Tibial artery (tissue), 4 donors: ENCODE measurements at regions of chr3 and their contacts with region 1.

Region 1: DNA sequence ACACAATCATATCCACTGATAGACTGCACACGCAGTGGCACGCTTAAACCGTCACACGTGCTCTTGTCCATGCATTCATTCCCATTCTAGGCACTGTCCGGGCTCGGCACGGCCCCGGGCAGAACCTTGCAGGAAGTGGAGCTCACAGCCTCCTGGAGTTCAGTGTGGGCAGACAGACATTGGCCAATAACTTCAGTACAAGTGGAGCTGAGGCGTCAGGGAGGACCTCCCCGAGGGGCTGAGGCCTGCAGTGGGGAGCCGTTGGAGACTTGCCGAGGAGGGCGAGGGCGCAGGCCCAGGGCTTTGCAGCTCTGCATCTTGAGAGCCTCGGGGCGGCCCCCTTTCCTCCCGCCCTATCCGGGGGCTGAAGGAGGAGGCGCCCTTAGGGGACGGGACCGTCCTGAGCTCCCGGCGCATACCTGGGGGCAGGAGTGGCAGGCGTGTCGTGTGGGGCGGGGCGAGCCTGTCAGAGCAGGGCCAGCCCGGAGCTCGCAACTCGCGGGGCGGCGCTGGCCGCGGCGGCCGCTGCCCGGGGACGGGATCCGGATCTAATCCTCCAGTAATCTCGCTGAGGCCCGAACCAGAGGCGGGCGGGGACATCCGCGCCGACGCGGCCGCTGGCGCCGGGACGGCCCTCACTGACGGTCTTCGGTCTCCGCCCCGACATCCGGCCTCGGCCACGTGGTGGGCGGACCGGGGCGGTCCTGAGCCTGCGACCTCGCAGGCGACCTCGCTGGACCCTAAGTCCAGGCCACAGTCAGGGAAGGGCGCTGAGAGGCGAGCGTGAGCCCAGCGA is at the start of gene ACY1:
- DNase-seq: peak; percentile 85 to 94
- H3K4me3 ChIP-seq: peak within 1 kb of the TSS; percentile 62 to 88
- H3K27ac ChIP-seq: peak within 1 kb of the TSS; percentile 94 to 96
- H3K4me1 ChIP-seq: peaks cover 0 to 28% (median 20%) of the 10 kb centered on the region in 4 donors
- H3K27me3 ChIP-seq: no peaks in the 10 kb centered on the region
- CTCF ChIP-seq: no peak

Region 2: GRCh38 chr3:51941798-51942602 is 41.0 kb before region 1 on chr3 and contains the starts of genes PARP3 and RRP9:
- intact Hi-C with region 1: loop called (anchors 5 kb)
- DNase-seq: peak; percentile 100
- H3K4me3 ChIP-seq: peak within 1 kb of the TSS; percentile 72 to 78
- H3K27ac ChIP-seq: peak within 1 kb of the TSS; percentile 88 to 97
- H3K4me1 ChIP-seq: peaks cover 0 to 33% (median 29%) of the 10 kb centered on the region in 4 donors
- H3K27me3 ChIP-seq: no peaks in the 10 kb centered on the region
- CTCF ChIP-seq: peak; percentile 99 to 100

Region 3: GRCh38 chr3:52036222-52036694 is 53.3 kb after region 1 on chr3:
- intact Hi-C with region 1: no loop called
- DNase-seq: no peak
- H3K4me3 ChIP-seq: no peak overlapping the region
- H3K27ac ChIP-seq: no peak overlapping the region
- H3K4me1 ChIP-seq: peaks cover 0 to 13% (median 4%) of the 10 kb centered on the region in 4 donors
- H3K27me3 ChIP-seq: no peaks in the 10 kb centered on the region
- CTCF ChIP-seq: no peak

Region 4: DNA sequence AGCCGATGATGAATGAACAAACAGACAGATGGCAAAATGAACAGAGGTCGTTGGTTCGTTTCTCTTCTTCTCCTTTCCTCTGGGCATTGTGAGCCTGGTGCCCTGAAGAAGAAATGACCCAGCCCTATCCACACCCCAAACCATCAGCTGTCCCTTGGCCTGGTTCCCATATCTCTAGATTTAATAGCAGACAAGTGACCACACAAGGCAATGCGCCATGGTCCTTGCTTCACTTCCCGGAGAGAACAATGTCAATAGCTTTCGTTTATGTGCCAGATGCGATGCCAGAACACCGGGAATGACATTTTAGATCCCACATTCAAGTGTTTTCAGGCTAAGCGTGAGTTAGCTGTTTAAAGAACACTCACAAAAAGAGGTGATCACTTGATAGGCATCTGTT is 153.5 kb after region 1 on chr3:
- intact Hi-C with region 1: no loop called
- DNase-seq: peak; percentile 76 to 81
- H3K4me3 ChIP-seq: no peak overlapping the region
- H3K27ac ChIP-seq: peak overlapping the region; percentile 18 to 21
- H3K4me1 ChIP-seq: peaks cover 0 to 9% (median 5%) of the 10 kb centered on the region in 4 donors
- H3K27me3 ChIP-seq: no peaks in the 10 kb centered on the region
- CTCF ChIP-seq: no peak